Heart right ventricle (tissue), 16 donors: ENCODE measurements at regions of chr3 and their contacts with region 1.

Region 1: GRCh38 chr3:72951259-72951722 is 45.3 kb upstream of the PPP4R2 start:
- DNase-seq: no peak
- ATAC-seq: no peak
- H3K4me3 ChIP-seq: no peak overlapping the region
- H3K27ac ChIP-seq: no peak overlapping the region
- H3K4me1 ChIP-seq: no peaks in the 10 kb centered on the region
- H3K27me3 ChIP-seq: no peaks in the 10 kb centered on the region
- CTCF ChIP-seq: no peak

Region 2: GRCh38 chr3:72336821-72337479 is 614.3 kb before region 1 on chr3:
- intact Hi-C with region 1: no loop called
- DNase-seq: peak; percentile 87 to 89
- ATAC-seq: peak; percentile 84 to 98 (median 89)
- H3K4me3 ChIP-seq: peak overlapping the region in 2 of 10 donors; percentile 18 to 35
- H3K27ac ChIP-seq: peak overlapping the region in 2 of 10 donors; percentile 35 to 49
- H3K4me1 ChIP-seq: peaks cover 0 to 33% (median 15%) of the 10 kb centered on the region in 9 donors
- H3K27me3 ChIP-seq: no peaks in the 10 kb centered on the region
- CTCF ChIP-seq: no peak

Region 3: DNA sequence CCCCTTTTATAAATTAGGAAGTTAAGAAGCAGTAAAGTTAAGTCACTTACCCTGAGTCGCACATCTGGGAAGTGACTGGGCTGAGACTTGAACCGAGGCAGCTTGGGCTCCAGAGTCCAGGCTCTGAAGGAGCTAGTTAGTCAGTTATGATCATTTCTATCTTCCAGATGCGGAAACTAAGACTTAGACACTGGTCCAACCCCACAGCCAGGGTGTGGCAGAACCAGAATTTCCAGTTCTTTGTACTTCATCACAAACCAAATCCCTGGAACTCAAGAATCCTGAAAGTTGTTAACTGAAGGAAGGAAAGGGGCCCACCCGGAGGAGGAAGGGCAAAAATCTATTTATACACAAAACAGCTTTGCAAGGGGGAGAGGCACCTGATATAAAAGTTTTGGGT is 492.9 kb before region 1 on chr3:
- intact Hi-C with region 1: no loop called
- DNase-seq: no peak
- ATAC-seq: no peak
- H3K4me3 ChIP-seq: no peak overlapping the region
- H3K27ac ChIP-seq: no peak overlapping the region
- H3K4me1 ChIP-seq: peaks cover 0 to 21% (median 15%) of the 10 kb centered on the region in 9 donors
- H3K27me3 ChIP-seq: no peaks in the 10 kb centered on the region
- CTCF ChIP-seq: no peak

Region 4: GRCh38 chr3:73045391-73045790 is 94.1 kb after region 1 on chr3:
- intact Hi-C with region 1: loop called in 1 of 10 experiments (anchors 5 kb)
- DNase-seq: no peak
- ATAC-seq: no peak
- H3K4me3 ChIP-seq: no peak overlapping the region
- H3K27ac ChIP-seq: no peak overlapping the region
- H3K4me1 ChIP-seq: peaks cover 0 to 78% (median 33%) of the 10 kb centered on the region in 9 donors
- H3K27me3 ChIP-seq: no peaks in the 10 kb centered on the region
- CTCF ChIP-seq: no peak